Activated CD8-positive, alpha-beta T cell treated with anti-CD3 and anti-CD28 coated beads, Interleukin-2, amount 10 ng/mL, durations not matched to agents 7 days and 5 days (primary cell): ENCODE measurements at regions of chr16 and their contacts with region 1.

Region 1: GRCh38 chr16:2867987-2868789 is 10.2 kb upstream of the PRSS22 start:
- DNase-seq: peak; percentile 96
- ATAC-seq: peak; percentile 96
- H3K4me3 Mint-ChIP-seq: peak overlapping the region; percentile 87
- H3K27ac Mint-ChIP-seq: peak overlapping the region; percentile 92
- H3K4me1 Mint-ChIP-seq: peaks cover 32% of the 10 kb centered on the region
- H3K27me3 Mint-ChIP-seq: peaks cover 13% of the 10 kb centered on the region

Region 2: DNA sequence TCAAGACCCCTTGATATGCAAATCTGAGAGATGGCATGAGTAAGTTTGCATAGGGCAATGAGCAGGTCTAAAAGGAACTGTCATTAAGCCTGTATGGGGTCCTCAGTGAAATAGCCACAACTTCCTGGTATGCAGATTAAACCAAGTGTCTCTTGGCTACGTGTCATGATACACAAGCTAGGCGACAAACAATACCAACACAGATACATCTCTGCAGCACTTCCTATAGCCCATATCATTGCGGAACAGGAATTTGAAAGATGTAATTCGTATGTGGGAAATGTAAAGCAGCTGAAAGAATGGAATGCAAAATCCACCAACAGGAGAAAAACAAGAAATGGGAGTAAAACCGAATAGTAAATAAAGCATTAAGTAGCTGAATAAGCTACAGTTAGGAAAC is 23.1 kb before region 1 on chr16:
- CTCF ChIA-PET with region 1: interaction called, 151 read pairs
- POLR2A ChIA-PET with region 1: interaction called, 14 read pairs
- DNase-seq: no peak
- ATAC-seq: no peak
- H3K4me3 Mint-ChIP-seq: no peak overlapping the region
- H3K27ac Mint-ChIP-seq: no peak overlapping the region
- H3K4me1 Mint-ChIP-seq: peaks cover 53% of the 10 kb centered on the region
- H3K27me3 Mint-ChIP-seq: peaks cover 8% of the 10 kb centered on the region

Region 3: GRCh38 chr16:2883027-2883851 is 15.1 kb after region 1 on chr16 and contains the start of gene FLYWCH2:
- CTCF ChIA-PET with region 1: interaction called, 20 read pairs
- POLR2A ChIA-PET with region 1: interaction called, 13 read pairs
- DNase-seq: peak; percentile 100
- ATAC-seq: peak; percentile 88
- H3K4me3 Mint-ChIP-seq: peak within 1 kb of the TSS; percentile 87
- H3K27ac Mint-ChIP-seq: peak within 1 kb of the TSS; percentile 97
- H3K4me1 Mint-ChIP-seq: peaks cover 14% of the 10 kb centered on the region
- H3K27me3 Mint-ChIP-seq: peaks cover 4% of the 10 kb centered on the region
- total RNA-seq, gene FLYWCH2: 22.5 to 22.8 TPM

Region 4: GRCh38 chr16:2919511-2920255 is 51.5 kb after region 1 on chr16:
- CTCF ChIA-PET with region 1: interaction called, 15 read pairs
- POLR2A ChIA-PET with region 1: no interaction called
- DNase-seq: peak; percentile 76
- ATAC-seq: no peak
- H3K4me3 Mint-ChIP-seq: no peak overlapping the region
- H3K27ac Mint-ChIP-seq: peak overlapping the region; percentile 52
- H3K4me1 Mint-ChIP-seq: peaks cover 11% of the 10 kb centered on the region
- H3K27me3 Mint-ChIP-seq: no peaks in the 10 kb centered on the region